CD8-positive, alpha-beta T cell (primary cell): ENCODE measurements at regions of chr5 and their contacts with region 1.

Region 1: GRCh38 chr5:171207256-171207847 is 101.7 kb upstream of the TLX3 start:
- DNase-seq: peak in 5 of 9 experiments; percentile 1 to 59 (median 17)
- ATAC-seq: no peak
- H3K4me3 ChIP-seq: no peak overlapping the region
- H3K4me3 Mint-ChIP-seq: no peak overlapping the region
- H3K27ac ChIP-seq: no peak overlapping the region
- H3K27ac Mint-ChIP-seq: no peak overlapping the region
- H3K4me1 ChIP-seq: no peaks in the 10 kb centered on the region
- H3K4me1 Mint-ChIP-seq: no peaks in the 10 kb centered on the region
- H3K27me3 ChIP-seq: no peaks in the 10 kb centered on the region
- H3K27me3 Mint-ChIP-seq: peaks cover 9% of the 10 kb centered on the region
- CTCF ChIP-seq: peak; percentile 33

Region 2: GRCh38 chr5:171336521-171337209 is 129.3 kb after region 1 on chr5:
- CTCF ChIA-PET with region 1: interaction called, 13 read pairs
- POLR2A ChIA-PET with region 1: no interaction called
- intact Hi-C with region 1: no loop called
- DNase-seq: peak in 2 of 9 experiments; percentile 40 to 58
- ATAC-seq: no peak
- H3K4me3 ChIP-seq: peak overlapping the region; percentile 36 to 46
- H3K4me3 Mint-ChIP-seq: peak overlapping the region; percentile 66
- H3K27ac ChIP-seq: no peak overlapping the region
- H3K27ac Mint-ChIP-seq: no peak overlapping the region
- H3K4me1 ChIP-seq: no peaks in the 10 kb centered on the region
- H3K4me1 Mint-ChIP-seq: peaks cover 7% of the 10 kb centered on the region
- H3K27me3 ChIP-seq: peaks cover 0 to 2% of the 10 kb centered on the region in 2 experiments
- H3K27me3 Mint-ChIP-seq: peaks cover 35% of the 10 kb centered on the region
- CTCF ChIP-seq: no peak

Region 3: GRCh38 chr5:171342362-171343111 is 135.2 kb after region 1 on chr5:
- CTCF ChIA-PET with region 1: interaction called, 13 read pairs
- POLR2A ChIA-PET with region 1: no interaction called
- intact Hi-C with region 1: loop called in 1 of 2 experiments (anchors 2 kb)
- DNase-seq: peak in 6 of 9 experiments; percentile 7 to 66 (median 31)
- ATAC-seq: no peak
- H3K4me3 ChIP-seq: no peak overlapping the region
- H3K4me3 Mint-ChIP-seq: no peak overlapping the region
- H3K27ac ChIP-seq: no peak overlapping the region
- H3K27ac Mint-ChIP-seq: no peak overlapping the region
- H3K4me1 ChIP-seq: no peaks in the 10 kb centered on the region
- H3K4me1 Mint-ChIP-seq: no peaks in the 10 kb centered on the region
- H3K27me3 ChIP-seq: peaks cover 0 to 2% of the 10 kb centered on the region in 2 experiments
- H3K27me3 Mint-ChIP-seq: peaks cover 21% of the 10 kb centered on the region
- CTCF ChIP-seq: peak; percentile 43

Region 4: DNA sequence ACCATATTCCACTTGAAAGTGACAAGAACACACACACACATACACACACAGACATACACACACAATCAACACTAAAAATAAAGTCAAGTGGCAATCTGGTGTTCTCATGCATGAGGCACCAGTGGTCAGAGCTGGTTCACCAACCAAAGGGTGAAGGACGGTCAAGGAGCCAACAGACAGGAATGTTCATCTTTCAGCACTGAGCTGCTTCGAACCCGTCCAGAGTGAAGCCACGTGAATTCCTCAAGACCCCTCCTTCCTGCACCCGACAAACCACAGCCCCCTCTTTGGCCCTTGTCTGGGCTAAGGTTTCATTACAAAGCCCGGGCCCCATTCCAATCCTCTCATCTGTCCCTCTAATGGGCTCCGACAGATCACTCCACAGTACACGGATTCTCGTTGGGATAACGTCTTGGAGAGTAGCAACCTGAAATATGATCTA is 493.8 kb after region 1 on chr5:
- CTCF ChIA-PET with region 1: no interaction called
- POLR2A ChIA-PET with region 1: no interaction called
- intact Hi-C with region 1: loop called in 1 of 2 experiments (anchors 5 kb)
- DNase-seq: peak in 1 of 9 experiments; percentile 19
- ATAC-seq: no peak
- H3K4me3 ChIP-seq: no peak overlapping the region
- H3K4me3 Mint-ChIP-seq: no peak overlapping the region
- H3K27ac ChIP-seq: no peak overlapping the region
- H3K27ac Mint-ChIP-seq: no peak overlapping the region
- H3K4me1 ChIP-seq: no peaks in the 10 kb centered on the region
- H3K4me1 Mint-ChIP-seq: no peaks in the 10 kb centered on the region
- H3K27me3 ChIP-seq: peaks cover 0 to 2% of the 10 kb centered on the region in 2 experiments
- H3K27me3 Mint-ChIP-seq: peaks cover 3% of the 10 kb centered on the region
- CTCF ChIP-seq: no peak

Region 5: DNA sequence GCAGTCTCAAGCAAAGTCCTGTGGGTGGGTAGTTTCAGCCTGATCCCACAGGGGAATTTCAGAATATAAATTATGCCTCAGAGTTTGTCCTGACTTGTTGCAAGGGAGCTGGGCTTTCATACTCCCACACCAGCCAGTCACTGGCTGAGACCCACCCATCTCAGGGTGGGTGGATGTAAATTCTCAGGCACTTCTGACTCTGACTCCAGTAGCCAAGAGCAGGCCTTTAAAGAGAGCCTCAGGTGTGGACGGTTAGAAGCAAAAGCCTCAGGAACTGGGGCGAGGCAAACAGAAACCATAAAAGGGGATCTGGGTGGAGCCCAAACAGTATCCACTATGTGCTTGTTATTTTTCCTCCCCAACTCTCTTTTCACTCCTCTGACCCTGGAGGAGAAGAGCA is 827.7 kb after region 1 on chr5:
- CTCF ChIA-PET with region 1: no interaction called
- POLR2A ChIA-PET with region 1: no interaction called
- intact Hi-C with region 1: loop called in 1 of 2 experiments (anchors 10 kb)
- DNase-seq: no peak
- ATAC-seq: no peak
- H3K4me3 ChIP-seq: no peak overlapping the region
- H3K4me3 Mint-ChIP-seq: no peak overlapping the region
- H3K27ac ChIP-seq: no peak overlapping the region
- H3K27ac Mint-ChIP-seq: no peak overlapping the region
- H3K4me1 ChIP-seq: no peaks in the 10 kb centered on the region
- H3K4me1 Mint-ChIP-seq: peaks cover 11% of the 10 kb centered on the region
- H3K27me3 ChIP-seq: no peaks in the 10 kb centered on the region
- H3K27me3 Mint-ChIP-seq: no peaks in the 10 kb centered on the region
- CTCF ChIP-seq: no peak